ENCODE measurements at regions of chr12 and their contacts with region 1.

Region 1: DNA sequence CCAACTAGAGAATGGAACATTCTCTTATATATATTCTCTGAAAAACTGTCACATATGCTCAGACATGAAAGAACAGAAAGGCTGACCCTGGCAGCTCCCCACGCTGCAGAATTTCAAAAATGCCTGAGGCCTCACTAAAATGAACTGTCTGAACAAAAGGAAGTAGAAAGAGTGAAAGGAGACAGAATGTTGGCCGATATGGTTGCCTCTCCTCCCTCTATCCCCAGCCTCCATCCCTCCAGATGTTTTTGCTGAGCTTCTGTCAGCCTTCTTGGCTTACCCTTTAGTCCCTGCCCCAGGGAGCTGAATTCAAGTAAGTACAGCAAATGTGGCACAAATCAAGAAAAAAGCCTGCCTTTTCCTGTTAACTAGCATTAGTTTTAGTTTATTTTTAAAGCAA is 6.9 kb downstream of the SMCO2 start:
- DNase-seq: no peak
- H3K4me3 ChIP-seq: no peak overlapping the region
- H3K27ac ChIP-seq: no peak overlapping the region
- H3K4me1 ChIP-seq: no peaks in the 10 kb centered on the region
- H3K27me3 ChIP-seq: no peaks in the 10 kb centered on the region
- CTCF ChIP-seq: no peak
- POLR2A ChIP-seq: no peak

Region 2: GRCh38 chr12:28710882-28711281 is 1257.5 kb after region 1 on chr12:
- intact Hi-C with region 1: loop called (anchors 10 kb)
- DNase-seq: no peak
- H3K4me3 ChIP-seq: no peak overlapping the region
- H3K27ac ChIP-seq: no peak overlapping the region
- H3K4me1 ChIP-seq: no peaks in the 10 kb centered on the region
- H3K27me3 ChIP-seq: no peaks in the 10 kb centered on the region
- CTCF ChIP-seq: no peak
- POLR2A ChIP-seq: no peak

Measured in breast epithelium (tissue), 4 donors.